ENCODE measurements at regions of chr14 and their contacts with region 1.

Region 1: DNA sequence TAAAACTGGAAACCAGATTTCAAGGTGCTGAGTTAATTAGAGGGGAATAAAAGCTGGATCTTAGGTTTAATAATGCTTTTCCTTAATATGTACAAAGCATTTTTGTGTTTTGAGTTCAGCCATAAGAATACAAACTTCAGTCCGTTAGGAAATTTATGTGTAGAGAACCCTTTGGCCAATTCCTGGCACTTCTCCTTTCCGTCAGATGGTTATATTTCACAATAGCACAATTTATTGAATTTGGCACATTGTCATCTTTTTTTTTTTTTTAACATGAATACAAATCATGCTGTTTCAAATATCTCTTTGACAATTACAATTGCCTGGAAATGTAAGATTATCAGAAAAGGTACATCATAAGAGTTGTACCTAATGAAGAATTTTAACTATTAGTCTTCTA is 56.2 kb upstream of the DDHD1 start:
- DNase-seq: no peak
- H3K4me3 ChIP-seq: no peak overlapping the region
- H3K27ac ChIP-seq: no peak overlapping the region
- H3K4me1 ChIP-seq: no peaks in the 10 kb centered on the region
- H3K27me3 ChIP-seq: no peaks in the 10 kb centered on the region
- CTCF ChIP-seq: no peak

Region 2: DNA sequence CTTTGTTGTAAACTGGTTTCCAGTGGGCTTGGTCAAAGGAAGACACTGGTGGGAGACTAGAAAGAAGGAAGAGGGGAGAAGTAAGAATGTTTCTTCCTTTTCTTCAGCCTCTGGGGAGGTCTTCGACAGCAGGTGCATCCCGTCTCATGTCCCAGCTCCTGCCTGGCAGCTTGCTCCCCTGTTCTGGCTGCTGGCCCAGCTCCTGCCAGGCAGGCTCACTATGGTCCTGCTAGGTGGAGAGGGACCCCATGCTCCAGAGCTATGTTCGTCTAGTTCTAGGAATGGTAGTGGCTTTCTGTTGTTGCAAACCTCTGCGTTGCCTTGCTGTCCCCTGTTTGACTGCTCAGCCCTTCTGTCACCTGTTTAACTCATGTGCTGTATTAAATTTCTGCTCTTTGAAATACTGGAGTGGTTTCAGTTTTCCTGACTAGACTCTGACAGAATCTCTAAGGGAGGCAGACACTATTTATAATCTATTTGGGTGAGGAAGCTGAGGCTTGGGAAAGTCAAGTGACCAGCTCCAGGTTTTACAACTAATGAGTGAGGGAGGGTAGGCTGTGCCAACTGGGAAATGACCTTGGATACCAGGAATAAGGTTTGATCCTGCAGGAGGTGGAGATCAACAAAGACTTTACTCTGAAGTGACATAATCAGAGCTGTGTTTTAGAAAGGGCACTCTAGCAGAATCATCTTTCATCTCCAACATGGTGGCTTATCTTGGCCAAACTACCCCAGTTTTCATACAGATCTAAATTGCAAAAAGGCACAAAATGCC is 38.4 kb after region 1 on chr14:
- CTCF ChIA-PET with region 1: no interaction called
- dilution Hi-C with region 1: loop called (anchors 5 kb)
- in situ Hi-C with region 1: no loop called
- intact Hi-C with region 1: no loop called
- DNase-seq: no peak
- H3K4me3 ChIP-seq: no peak overlapping the region
- H3K27ac ChIP-seq: no peak overlapping the region
- H3K4me1 ChIP-seq: no peaks in the 10 kb centered on the region
- H3K27me3 ChIP-seq: no peaks in the 10 kb centered on the region
- CTCF ChIP-seq: no peak

Measured in mammary epithelial cell (primary cell).